ENCODE measurements at regions of chr5 and their contacts with region 1.

Region 1: DNA sequence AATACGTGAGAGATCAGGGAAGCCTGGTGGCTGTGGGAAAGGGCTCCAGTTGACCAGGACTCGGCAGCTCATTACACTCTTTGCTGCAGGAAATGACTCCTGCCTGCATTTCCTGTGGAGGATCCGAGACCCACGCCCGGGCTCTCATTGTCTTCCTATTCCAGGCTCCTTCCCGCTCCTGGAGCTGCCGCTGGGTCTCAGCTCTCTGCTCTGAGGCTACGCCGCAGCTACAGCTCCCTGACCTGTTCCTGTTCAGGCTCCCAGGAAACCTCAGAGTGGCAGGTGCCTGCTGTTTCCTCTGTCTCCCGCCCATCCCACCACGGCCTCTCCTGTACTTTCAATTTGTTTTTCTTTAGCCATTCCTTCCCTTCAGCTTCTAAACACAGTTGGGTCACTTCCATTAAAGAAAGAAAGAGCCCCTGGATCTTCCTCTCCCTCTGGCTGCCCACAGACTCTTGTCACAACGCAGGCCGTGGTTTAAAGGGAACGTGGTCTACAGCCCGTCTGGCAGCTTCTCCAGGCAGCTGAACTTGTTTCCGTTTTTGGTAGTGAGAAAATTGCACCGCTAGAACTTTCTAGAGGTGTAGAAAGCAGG is 71.5 kb downstream of the IL6ST start:
- DNase-seq: no peak
- H3K4me3 Mint-ChIP-seq: peak overlapping the region; percentile 5
- H3K27ac Mint-ChIP-seq: no peak overlapping the region
- H3K4me1 Mint-ChIP-seq: peaks cover 17% of the 10 kb centered on the region
- H3K27me3 Mint-ChIP-seq: no peaks in the 10 kb centered on the region
- CTCF ChIP-seq: no peak

Region 2: DNA sequence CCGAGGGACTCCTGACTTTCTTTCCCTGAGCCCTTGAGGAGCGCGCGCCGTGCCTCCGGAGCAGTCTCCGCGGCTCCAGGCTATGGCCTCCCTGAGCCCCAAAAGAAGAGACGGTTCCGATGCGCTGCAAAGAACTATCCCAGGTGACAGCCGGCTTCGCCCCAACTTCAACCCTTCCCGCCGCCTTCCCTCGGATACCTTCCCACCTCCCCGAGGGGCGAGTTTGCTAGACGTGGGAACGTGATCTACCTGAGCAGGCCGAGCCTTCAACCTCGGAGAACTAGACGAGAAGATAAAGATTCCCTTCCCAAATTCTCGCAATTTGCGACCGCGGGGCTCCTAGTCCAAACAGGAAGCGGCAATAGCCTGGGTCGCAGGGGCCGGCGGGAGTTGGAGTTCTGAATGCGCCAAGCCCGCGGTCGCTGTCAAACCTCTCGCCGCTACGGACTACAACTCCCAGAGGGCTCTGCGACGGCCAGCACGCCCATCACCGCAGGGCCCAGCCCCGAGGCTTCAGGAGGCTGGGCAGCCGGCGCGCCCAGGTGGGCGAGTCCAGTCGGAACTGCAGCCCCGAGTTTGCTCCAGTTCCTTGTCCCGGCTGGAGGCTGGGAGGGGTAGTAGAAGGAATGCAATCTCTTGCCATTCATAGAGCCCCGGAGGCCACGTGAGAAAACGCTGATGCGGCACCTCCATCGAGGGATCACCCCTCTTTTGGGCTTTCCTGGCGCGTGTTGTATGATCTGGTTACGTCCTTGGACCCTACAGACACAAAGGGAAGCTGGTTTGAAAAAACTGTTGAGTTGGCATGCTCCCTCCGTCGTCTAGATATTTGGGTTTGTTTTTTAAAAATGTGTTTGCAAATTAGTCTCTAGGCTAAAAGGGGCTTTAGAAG is 211.1 kb before region 1 on chr5 and contains the start of gene SLC38A9:
- CTCF ChIA-PET with region 1: no interaction called
- intact Hi-C with region 1: loop called (anchors 5 kb)
- DNase-seq: peak; percentile 96
- H3K4me3 Mint-ChIP-seq: peak within 1 kb of the TSS; percentile 89
- H3K27ac Mint-ChIP-seq: peak within 1 kb of the TSS; percentile 25
- H3K4me1 Mint-ChIP-seq: no peaks in the 10 kb centered on the region
- H3K27me3 Mint-ChIP-seq: no peaks in the 10 kb centered on the region
- CTCF ChIP-seq: no peak
- total RNA-seq, gene SLC38A9: 30.3 and 30.5 TPM in 2 replicates

Region 3: GRCh38 chr5:57442080-57442839 is 1519.0 kb after region 1 on chr5:
- CTCF ChIA-PET with region 1: no interaction called
- intact Hi-C with region 1: no loop called
- DNase-seq: no peak
- H3K4me3 Mint-ChIP-seq: no peak overlapping the region
- H3K27ac Mint-ChIP-seq: peak overlapping the region; percentile 11
- H3K4me1 Mint-ChIP-seq: peaks cover 45% of the 10 kb centered on the region
- H3K27me3 Mint-ChIP-seq: no peaks in the 10 kb centered on the region
- CTCF ChIP-seq: no peak